KBM-7 (cell line): ENCODE measurements at regions of chr5 and their contacts with region 1.

Region 1: DNA sequence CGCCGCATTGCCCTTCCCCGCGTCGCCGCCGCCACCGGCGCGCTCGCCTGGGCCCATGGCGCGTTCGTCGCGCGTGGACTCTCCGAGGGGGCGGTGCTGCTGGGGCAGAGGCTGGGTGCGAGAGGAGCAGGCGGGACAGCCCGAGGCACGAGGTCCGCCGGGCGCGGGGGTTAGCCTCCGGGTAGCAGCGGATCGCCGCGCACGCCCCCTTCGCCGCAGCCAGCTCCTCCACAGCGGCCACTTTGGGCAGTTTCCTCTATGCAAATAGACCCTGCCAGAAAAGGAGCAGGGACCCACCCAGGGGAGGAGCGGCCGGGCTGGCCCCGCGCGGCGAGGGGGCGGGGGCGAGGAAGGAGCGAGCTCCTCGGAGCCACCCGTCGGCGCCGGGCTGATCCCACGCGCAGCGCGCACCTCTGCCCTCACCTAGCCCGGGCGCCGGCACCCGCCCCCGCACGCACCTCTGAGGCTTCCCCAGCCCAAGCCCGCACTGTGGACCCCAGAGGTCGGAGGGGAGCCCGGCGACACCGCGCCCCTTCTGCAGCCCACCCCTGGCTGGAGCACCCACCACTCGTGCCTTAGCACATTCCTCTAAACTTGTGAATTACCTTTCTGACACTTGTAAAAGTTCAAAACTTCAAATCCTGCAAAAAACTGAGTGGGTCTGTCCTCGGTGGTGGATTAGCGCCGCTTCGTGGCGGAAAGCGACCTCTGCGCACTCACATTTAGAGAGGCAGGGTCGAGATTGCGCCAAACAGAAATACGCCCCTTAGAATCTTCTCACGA is at the start of gene COL23A1:
- DNase-seq: peak; percentile 73

Region 2: GRCh38 chr5:178279725-178280438 is 310.4 kb before region 1 on chr5:
- in situ Hi-C with region 1: loop called (anchors 25 kb)
- DNase-seq: peak; percentile 58